PC-9 (cell line): ENCODE measurements at regions of chr12 and their contacts with region 1.

Region 1: DNA sequence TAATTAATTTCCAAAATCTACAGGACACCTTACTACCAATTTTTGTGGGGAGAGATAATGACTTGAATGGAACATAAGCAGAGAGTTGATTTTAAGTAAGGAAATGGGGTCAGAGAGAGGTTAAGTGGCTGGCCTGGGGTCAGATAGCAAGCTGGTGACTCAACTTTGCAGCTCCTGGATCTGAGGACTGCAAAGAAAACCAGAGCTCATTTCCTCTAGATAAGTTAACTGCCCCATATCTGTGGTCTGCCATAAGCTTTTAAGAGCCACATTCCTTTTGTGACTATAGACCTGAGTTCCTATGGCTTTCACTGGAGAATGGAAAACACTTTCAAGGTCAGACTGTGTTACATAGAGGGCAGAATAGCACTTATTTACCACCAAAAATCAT is 201.2 kb upstream of the PRICKLE1 start:
- DNase-seq: peak; percentile 48 to 76
- H3K4me3 ChIP-seq: no peak overlapping the region
- H3K27ac ChIP-seq: peak overlapping the region; percentile 13; the same call in 1 of the 2 replicates
- H3K4me1 ChIP-seq: peaks cover 18% of the 10 kb centered on the region
- H3K27me3 ChIP-seq: no peaks in the 10 kb centered on the region
- CTCF ChIP-seq: no peak

Region 2: DNA sequence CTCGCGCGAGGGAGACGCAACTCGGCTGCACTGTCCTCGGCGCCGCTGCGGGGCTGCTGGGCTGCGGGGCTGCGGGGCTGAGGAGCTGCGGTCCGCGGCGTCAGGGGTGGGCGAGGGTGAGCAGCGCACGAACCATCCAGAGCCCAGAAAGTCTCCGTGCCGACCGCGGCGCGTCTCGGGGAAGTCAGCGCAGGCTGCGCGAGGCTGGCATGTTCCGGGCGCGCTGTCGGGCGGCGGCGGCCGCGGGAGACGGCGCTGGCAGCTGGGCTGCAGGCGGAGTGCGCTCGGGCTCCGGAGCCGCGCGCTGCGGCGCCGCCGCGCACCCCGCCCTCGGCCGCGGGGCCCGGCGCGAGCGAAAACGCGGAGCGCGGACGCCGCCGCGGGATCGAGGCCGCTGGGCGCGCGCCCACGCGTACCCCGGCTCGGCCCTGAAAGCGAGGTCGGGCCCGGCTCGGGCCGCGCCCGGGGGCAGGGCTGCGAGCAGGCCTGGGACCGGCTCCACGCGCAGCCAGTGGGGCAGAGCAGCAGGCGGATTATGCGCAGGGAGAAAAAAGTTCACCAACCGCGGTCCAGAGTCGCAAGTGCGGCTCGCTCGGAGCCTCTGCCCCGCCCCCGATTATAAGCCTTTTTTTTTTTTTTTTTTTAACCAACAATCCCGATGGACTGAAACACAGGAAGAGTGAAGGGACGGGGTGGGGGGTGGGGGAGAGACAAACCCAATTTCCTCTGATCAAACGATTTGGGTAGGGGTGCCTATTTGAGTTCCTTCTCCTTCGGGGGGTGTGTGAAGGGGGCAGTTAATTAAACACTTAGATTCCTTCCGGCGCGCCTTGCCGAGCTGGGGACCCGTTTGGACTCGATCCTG is 201.1 kb before region 1 on chr12 and contains the start of gene PRICKLE1:
- CTCF ChIA-PET with region 1: no interaction called
- POLR2A ChIA-PET with region 1: no interaction called
- intact Hi-C with region 1: loop called (anchors 1 kb)
- DNase-seq: peak; percentile 36 to 56
- H3K4me3 ChIP-seq: peak within 1 kb of the TSS; percentile 89
- H3K27ac ChIP-seq: no peak within 1 kb of the TSS
- H3K4me1 ChIP-seq: peaks cover 13% of the 10 kb centered on the region; the same call in 1 of the 2 replicates
- H3K27me3 ChIP-seq: no peaks in the 10 kb centered on the region
- CTCF ChIP-seq: no peak
- total RNA-seq, gene PRICKLE1: 6.7 and 7.0 TPM in 2 replicates